Thyroid gland (tissue), 4 donors: ENCODE measurements at regions of chr2 and their contacts with region 1.

Region 1: DNA sequence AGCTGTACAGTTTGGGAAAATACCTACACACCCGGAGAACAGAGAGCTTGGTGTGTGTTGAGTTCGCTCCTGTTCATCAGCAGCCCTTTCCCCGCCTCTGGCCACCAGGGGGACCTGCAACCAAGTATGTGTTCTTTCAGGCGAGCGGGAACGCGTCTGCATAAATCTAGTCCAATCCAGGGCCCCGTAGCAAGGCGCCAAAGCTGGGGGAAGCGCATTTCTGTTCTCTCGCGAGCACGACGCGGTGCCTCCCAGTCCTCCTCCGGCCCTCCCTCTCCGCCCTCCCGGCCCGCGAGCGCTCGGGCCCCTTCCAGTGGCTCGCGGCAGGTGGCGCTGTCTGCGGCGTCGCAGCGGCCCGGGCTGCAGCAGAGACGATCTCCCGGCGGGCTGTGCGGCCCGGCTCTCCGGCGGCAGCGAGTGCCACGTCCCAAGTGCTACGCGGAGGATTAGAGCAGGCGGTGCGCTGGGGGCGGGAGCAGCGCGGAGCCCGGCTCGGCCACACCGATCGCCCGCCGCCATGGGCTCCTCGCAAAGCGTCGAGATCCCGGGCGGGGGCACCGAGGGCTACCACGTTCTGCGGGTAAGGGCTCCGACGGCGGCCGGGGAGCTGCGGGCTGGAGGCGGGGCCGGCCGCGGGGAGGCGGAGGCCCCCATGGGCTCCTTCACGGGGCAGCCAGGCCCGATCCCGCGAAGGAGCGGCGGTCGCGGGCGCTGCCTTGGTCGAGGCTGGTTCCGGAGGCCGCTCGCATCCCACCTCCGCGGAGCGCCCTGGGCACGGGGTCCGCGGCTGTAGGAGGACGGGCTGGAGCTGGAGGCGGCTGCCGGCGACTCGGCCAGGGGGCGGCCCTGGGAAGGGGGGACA is at the start of gene GORASP2:
- DNase-seq: peak; percentile 99
- H3K4me3 ChIP-seq: peak within 1 kb of the TSS; percentile 71 to 94 (median 81)
- H3K27ac ChIP-seq: peak within 1 kb of the TSS; percentile 84 to 92 (median 89)
- H3K4me1 ChIP-seq: peaks cover 15 to 27% of the 10 kb centered on the region in 2 donors
- H3K27me3 ChIP-seq: no peaks in the 10 kb centered on the region
- CTCF ChIP-seq: peak; percentile 92 to 99 (median 96)
- POLR2A ChIP-seq: peak in 1 of 2 donors; percentile 92
- total RNA-seq, gene GORASP2: 79.6 to 114 (median 87.1) TPM

Region 2: DNA sequence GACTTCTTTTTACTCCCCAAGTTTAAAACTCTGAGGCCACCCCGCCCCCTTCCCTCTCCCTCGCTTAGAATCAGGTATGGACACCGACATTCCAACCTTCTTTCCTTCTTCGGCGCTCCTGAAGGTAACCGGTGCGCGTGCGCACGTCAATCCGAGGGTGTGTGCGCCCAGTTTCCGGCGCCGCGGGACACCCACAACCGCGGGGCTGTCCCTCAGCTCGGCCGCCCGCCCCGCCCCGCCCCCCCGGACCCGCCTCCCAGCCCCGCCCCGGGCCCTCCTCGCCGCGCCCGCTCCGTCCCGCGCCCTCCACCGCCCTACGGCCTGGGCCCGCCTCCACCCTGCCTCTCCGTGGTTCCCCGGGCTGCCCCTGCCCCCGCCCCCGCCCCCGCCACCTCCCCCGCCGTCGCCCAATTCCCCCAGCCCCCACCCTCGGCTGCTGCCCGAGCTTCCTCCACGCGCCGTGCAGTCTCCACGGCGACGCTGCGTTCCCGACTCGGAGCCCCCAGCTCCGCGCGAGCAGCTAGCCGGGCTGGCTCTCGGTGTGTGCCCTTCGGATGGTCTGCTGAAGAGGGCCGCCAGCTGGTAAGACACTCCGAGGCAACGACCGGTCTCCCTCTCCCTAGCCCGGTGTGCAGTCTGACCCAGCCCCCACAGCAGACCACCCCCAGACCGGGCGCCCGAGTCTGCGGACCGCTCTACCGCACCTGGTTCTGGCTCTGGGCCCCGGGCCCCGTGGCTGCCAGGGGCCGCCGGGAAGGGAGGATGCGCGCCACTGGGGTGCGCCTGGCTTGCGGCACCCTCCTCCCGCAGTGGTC is 158.2 kb before region 1 on chr2:
- intact Hi-C with region 1: no loop called
- DNase-seq: peak; percentile 82 to 85
- H3K4me3 ChIP-seq: peak overlapping the region; percentile 51 to 66 (median 56)
- H3K27ac ChIP-seq: peak overlapping the region; percentile 31 to 76 (median 64)
- H3K4me1 ChIP-seq: peaks cover 0 to 9% of the 10 kb centered on the region in 2 donors
- H3K27me3 ChIP-seq: no peaks in the 10 kb centered on the region
- CTCF ChIP-seq: no peak
- POLR2A ChIP-seq: peak in 1 of 2 donors; percentile 63

Region 3: DNA sequence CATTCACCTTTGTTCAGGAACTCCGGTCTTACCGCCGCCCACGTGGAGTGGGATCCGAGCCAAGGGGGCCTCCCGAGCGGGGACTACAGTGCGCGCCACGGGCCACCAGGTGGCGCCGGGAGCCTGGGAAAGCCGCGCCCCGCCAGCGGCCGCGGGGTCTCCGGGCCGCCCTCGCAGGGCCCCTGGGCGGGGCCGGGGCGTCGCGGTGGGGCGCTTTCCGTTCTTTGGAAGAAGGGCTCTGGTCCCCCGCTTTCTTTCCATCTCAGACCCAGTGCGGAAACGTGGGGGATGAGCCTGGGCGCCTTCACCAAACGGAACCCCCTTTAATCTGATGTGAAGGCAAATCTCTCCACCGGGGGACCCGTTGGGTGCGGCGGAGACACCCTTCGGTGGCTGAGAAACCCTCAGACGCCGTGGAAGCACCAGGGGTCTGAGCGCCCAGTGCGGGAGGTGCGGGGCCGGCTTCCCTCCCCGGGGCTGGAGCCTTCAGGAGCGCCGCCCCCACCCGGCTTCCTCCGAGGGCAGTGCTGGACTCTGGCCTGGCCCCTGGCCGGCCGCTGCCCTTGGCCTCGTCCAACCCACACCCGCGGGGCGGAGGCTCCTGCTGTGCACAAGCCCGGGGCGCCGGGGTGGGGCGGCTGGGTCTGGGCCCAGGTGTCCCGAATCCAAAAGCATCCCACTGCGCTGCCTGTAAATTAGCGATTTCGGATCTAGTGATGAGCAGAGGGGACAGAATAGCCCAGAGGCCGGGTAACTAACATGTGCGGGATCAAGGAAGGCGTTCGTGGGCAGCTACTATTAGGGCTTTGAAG is 44.6 kb after region 1 on chr2:
- intact Hi-C with region 1: loop called (anchors 5 kb)
- DNase-seq: peak; percentile 93
- H3K4me3 ChIP-seq: peak overlapping the region in 2 of 3 donors; percentile 26 to 57
- H3K27ac ChIP-seq: peak overlapping the region; percentile 20 to 75 (median 69)
- H3K4me1 ChIP-seq: peaks cover 8 to 14% of the 10 kb centered on the region in 2 donors
- H3K27me3 ChIP-seq: no peaks in the 10 kb centered on the region
- CTCF ChIP-seq: peak in 5 of 6 experiments; percentile 60 to 99 (median 97)
- POLR2A ChIP-seq: peak in 1 of 2 donors; percentile 56